Activated CD4-positive, alpha-beta memory T cell treated with anti-CD3 and anti-CD28 coated beads for 36 hours (primary cell): ENCODE measurements at regions of chr15 and their contacts with region 1.

Region 1: GRCh38 chr15:45457641-45458433 is 64.7 kb downstream of the SLC30A4 start:
- DNase-seq: peak; percentile 79
- H3K4me3 Mint-ChIP-seq: peak overlapping the region; percentile 74
- H3K27ac Mint-ChIP-seq: peak overlapping the region; percentile 85
- H3K4me1 Mint-ChIP-seq: peaks cover 45% of the 10 kb centered on the region
- H3K27me3 Mint-ChIP-seq: no peaks in the 10 kb centered on the region

Region 2: DNA sequence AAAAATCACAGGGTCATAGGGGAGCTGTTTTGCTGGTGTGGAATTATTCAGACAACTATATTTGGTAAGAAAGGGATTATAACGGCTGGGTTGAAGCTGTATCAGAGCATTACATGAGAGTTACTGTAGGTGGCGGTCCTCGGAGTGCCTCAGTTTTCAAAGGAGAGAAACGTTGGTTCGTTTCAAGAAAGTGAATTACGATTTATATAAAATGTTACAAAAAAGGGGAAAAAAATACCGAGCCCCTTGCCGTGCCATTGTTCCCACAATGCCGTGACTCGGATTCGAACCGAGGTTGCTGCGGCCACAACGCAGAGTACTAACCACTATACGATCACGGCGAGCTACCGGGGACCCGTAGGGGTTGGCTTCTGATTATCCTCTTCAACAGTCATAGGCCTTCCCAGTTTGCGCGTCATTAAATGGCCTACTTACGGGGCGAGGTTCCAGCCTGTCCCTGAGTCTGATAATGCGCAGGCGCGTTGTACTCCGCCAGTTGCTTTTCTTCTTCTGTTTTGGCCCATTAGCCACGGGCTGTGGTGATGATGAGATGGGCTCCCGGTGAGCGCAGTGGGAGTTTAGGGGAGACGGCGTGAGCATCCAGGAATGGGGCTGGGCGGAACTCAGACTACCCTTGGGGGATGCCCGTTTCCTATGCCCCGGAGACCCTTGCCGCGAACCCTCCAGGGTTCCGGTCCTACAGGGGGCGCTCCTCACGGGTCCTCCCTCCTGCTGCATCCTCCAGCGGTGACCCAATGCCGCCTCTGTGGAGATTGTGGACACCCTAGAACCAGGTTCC is 259.3 kb before region 1 on chr15:
- CTCF ChIA-PET with region 1: no interaction called
- POLR2A ChIA-PET with region 1: no interaction called
- intact Hi-C with region 1: loop called (anchors 2 kb)
- DNase-seq: peak; percentile 98
- H3K4me3 Mint-ChIP-seq: no peak overlapping the region
- H3K27ac Mint-ChIP-seq: no peak overlapping the region
- H3K4me1 Mint-ChIP-seq: peaks cover 13% of the 10 kb centered on the region
- H3K27me3 Mint-ChIP-seq: peaks cover 3% of the 10 kb centered on the region

Region 3: DNA sequence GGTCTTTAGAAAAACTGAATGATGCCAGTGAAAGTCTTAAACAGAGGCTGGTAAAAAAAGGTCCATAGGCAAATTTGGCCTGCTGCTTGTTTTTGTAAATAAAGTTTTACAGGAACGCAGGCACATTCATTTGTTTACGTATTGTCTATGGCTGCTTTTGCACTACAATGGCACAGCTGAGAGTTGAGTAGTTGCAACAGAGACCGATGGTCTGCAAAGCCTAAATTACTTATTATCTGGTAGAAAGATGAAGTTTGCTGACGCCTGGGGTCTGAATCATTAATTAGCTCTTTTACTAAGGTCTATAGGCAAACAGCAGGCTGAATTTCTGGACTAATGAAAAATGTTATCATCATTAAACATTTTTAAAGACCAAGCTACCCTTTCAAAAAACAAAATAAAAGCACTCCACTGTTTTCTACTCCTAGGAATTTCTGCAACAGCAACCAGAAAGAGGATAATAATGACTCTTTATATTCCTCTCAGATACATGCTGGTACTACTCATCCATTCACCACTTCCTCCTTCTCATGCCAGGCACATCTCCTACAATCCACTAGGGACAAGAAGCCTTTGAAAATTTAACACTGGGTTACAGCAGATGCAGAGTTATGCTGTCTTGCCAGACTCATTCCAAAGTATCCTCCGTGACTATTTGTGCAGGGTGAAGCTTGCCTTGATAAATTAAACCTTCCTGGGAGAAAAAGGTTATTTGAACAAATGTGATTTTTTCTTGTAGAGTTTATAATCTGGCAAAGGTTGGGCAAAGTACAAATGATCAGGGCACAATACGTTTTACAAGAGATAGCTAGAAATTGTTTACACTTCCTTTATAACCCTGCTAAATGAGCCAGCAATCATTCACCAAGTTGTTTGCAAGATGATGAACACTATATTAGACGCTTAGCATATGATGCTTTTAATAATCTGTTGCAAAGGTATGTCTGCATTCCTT is 85.5 kb before region 1 on chr15:
- CTCF ChIA-PET with region 1: no interaction called
- POLR2A ChIA-PET with region 1: no interaction called
- intact Hi-C with region 1: no loop called
- DNase-seq: no peak
- H3K4me3 Mint-ChIP-seq: no peak overlapping the region
- H3K27ac Mint-ChIP-seq: no peak overlapping the region
- H3K4me1 Mint-ChIP-seq: peaks cover 7% of the 10 kb centered on the region
- H3K27me3 Mint-ChIP-seq: peaks cover 42% of the 10 kb centered on the region

Region 4: GRCh38 chr15:45402162-45402954 is 55.5 kb before region 1 on chr15:
- CTCF ChIA-PET with region 1: interaction called, 9 read pairs
- POLR2A ChIA-PET with region 1: interaction called, 7 read pairs
- intact Hi-C with region 1: loop called (anchors 1 kb)
- DNase-seq: peak; percentile 98
- H3K4me3 Mint-ChIP-seq: peak overlapping the region; percentile 98
- H3K27ac Mint-ChIP-seq: peak overlapping the region; percentile 90
- H3K4me1 Mint-ChIP-seq: peaks cover 31% of the 10 kb centered on the region
- H3K27me3 Mint-ChIP-seq: no peaks in the 10 kb centered on the region

Region 5: DNA sequence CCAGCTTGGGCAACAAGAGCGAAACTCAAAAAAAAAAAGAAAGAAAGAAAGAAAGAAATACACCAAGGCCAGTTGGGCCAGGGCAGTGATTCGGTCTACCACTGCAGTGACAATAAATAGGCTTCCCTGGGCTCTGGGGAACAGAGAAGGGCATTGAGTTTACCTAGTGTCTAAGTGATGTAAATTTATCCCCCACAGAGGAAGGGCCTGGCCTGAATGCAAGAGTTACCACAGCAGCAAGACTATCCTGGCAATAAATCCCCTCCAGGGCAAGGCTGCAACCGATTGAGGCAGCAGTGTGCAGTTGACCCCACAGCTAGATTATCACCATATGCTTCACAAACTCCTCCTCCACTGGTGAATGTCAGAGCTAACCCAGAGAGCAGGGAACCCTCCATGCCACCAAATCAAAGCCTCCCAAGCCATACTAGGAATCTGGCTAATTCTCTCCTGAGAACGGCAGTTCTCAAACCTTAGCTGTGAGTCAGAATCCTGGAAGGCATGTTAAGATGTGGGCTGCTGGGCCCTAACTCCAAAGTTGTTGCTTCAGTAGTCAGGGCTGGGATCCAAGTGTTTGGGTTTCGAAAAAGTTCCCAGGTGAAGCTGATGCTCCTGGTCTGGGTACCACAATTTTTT is 15.2 kb before region 1 on chr15:
- CTCF ChIA-PET with region 1: interaction called, 22 read pairs
- POLR2A ChIA-PET with region 1: no interaction called
- intact Hi-C with region 1: no loop called
- DNase-seq: no peak
- H3K4me3 Mint-ChIP-seq: no peak overlapping the region
- H3K27ac Mint-ChIP-seq: no peak overlapping the region
- H3K4me1 Mint-ChIP-seq: no peaks in the 10 kb centered on the region
- H3K27me3 Mint-ChIP-seq: no peaks in the 10 kb centered on the region

Region 6: GRCh38 chr15:45611305-45611704 is 153.5 kb after region 1 on chr15:
- CTCF ChIA-PET with region 1: interaction called, 120 read pairs
- POLR2A ChIA-PET with region 1: no interaction called
- intact Hi-C with region 1: loop called (anchors 1 kb)
- DNase-seq: no peak
- H3K4me3 Mint-ChIP-seq: no peak overlapping the region
- H3K27ac Mint-ChIP-seq: no peak overlapping the region
- H3K4me1 Mint-ChIP-seq: peaks cover 11% of the 10 kb centered on the region
- H3K27me3 Mint-ChIP-seq: no peaks in the 10 kb centered on the region

Region 7: DNA sequence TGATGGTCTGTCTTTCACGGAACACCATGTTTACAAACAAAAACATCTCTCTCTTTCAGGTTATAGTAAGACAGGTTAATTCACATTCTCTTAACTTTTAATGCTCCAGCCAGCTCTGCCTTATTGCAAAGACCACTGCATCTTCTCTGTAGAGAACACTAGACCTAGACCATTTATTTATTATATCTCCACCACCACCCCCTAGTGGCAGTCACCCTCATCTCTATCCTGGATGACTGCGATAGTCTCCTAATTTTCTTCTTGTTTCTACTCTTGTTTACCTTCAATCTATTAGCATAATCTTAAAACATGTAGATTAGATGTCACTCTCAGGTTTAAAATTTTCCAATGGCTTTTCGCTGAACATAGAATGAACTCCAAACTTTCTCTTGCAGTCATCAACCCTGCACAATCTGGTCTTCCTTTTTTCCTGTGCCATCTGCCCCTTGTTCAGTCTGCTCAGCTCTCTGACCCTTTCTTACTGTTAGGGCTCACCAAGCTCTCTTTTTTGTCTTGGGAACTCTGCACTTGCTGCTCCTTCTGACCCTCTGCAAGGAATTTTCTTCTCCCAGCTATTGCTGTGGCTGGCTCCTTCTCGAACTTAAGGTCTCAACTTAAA is 332.6 kb after region 1 on chr15:
- CTCF ChIA-PET with region 1: no interaction called
- POLR2A ChIA-PET with region 1: no interaction called
- intact Hi-C with region 1: loop called (anchors 5 kb)
- DNase-seq: peak; percentile 18
- H3K4me3 Mint-ChIP-seq: no peak overlapping the region
- H3K27ac Mint-ChIP-seq: no peak overlapping the region
- H3K4me1 Mint-ChIP-seq: no peaks in the 10 kb centered on the region
- H3K27me3 Mint-ChIP-seq: peaks cover 18% of the 10 kb centered on the region